ENCODE measurements at regions of chr7 and their contacts with region 1.

Region 1: DNA sequence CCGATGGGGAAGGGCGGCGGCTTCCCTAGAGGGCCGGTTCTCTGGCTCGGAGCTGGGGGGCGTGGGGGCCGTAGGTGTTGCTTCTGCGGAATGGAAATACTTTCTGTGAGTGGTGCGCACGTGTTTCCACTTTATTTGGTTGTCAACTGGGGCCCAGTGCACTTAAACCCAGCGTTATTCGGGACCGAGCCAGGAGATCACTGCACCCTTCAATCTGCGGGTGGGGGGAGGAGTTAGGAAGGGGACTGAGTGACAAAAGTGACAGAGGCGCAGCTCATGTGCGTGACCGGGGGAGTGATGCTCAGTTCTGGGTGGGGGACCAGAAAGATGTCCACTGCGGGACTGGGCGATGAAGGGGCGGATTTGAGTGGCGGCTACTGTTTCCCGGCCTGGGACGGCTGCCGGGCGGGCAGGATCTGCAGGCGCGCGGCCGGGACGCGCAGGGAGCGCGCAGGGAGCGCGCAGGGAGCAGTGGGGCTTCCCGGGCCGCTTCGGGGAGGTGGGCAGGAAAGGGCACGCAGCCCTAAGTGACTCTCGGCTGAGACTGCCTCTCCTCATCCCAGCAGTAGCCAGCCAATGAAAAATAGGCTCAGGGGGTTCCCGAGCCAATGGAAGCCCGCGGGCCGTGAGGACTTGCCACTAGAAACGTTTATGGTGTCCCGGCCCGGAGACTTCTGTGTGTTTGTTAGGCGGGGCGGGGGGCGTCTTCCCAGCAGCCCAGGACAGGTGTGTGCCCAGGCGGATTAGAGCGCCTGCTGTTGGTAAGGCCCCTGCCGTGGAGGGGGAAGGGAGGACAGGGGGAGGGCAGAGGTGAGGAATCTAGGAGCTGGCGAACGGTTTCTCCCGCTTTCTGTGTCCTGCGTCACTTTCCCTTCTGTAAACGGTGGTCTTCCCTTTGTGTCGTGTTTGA is 54.3 kb upstream of the KDM7A start:
- DNase-seq: peak; percentile 67
- H3K4me3 Mint-ChIP-seq: peak overlapping the region; percentile 90
- H3K27ac Mint-ChIP-seq: peak overlapping the region; percentile 92
- H3K4me1 Mint-ChIP-seq: peaks cover 51% of the 10 kb centered on the region
- H3K27me3 Mint-ChIP-seq: no peaks in the 10 kb centered on the region

Region 2: GRCh38 chr7:140062528-140063299 is 168.4 kb before region 1 on chr7 and contains the start of gene PARP12:
- CTCF ChIA-PET with region 1: no interaction called
- POLR2A ChIA-PET with region 1: interaction called, 13 read pairs
- DNase-seq: peak; percentile 93
- H3K4me3 Mint-ChIP-seq: peak within 1 kb of the TSS; percentile 80
- H3K27ac Mint-ChIP-seq: peak within 1 kb of the TSS; percentile 82
- H3K4me1 Mint-ChIP-seq: peaks cover 48% of the 10 kb centered on the region
- H3K27me3 Mint-ChIP-seq: peaks cover 5% of the 10 kb centered on the region
- total RNA-seq, gene PARP12: 146 to 151 TPM

Region 3: DNA sequence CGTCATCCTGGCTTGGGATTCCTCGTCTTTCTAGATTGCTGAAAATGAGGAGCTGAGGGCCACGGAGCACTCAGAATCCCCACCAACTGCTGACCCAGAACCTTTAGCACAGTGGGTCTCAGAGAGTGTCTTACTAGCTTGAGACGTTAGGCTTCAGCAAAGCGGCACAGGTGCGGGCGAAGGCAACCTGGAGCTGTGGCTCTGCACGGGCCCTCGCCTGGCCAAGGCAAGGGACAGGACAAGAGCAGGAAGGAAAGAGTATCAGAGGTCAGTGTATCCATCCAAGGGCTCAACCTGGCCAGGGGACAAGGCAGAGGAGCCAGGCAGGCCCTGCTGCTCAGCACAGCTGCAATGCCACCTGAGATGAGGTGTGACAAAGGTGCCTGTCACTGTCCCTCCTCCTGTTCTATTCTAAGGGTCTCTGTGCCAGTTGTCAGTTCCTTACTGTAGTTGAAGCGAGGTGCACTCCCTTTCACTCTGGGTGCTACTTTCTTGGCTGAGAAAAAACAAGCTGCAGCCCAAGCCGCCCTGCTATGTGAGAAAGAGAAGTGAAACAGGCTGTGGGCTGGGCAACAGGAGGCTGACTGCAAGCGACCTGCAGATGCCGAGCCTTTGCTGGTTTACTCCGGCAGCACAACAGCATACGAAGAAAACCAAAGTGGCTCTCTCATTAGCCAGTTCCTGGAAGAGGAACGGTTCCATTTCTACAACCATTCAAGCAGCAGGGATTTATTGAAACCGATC is 21.1 kb before region 1 on chr7:
- CTCF ChIA-PET with region 1: interaction called, 12 read pairs
- POLR2A ChIA-PET with region 1: interaction called, 318 read pairs
- DNase-seq: peak; percentile 80
- H3K4me3 Mint-ChIP-seq: peak overlapping the region; percentile 58
- H3K27ac Mint-ChIP-seq: peak overlapping the region; percentile 94
- H3K4me1 Mint-ChIP-seq: peaks cover 90% of the 10 kb centered on the region
- H3K27me3 Mint-ChIP-seq: no peaks in the 10 kb centered on the region

Region 4: GRCh38 chr7:140242057-140243031 is 11.2 kb after region 1 on chr7:
- CTCF ChIA-PET with region 1: interaction called, 4 read pairs
- POLR2A ChIA-PET with region 1: interaction called, 15 read pairs
- DNase-seq: no peak
- H3K4me3 Mint-ChIP-seq: no peak overlapping the region
- H3K27ac Mint-ChIP-seq: peak overlapping the region; percentile 8
- H3K4me1 Mint-ChIP-seq: peaks cover 20% of the 10 kb centered on the region
- H3K27me3 Mint-ChIP-seq: no peaks in the 10 kb centered on the region

Region 5: GRCh38 chr7:140260352-140261104 is 29.4 kb after region 1 on chr7:
- CTCF ChIA-PET with region 1: interaction called, 6 read pairs
- POLR2A ChIA-PET with region 1: interaction called, 93 read pairs
- DNase-seq: no peak
- H3K4me3 Mint-ChIP-seq: no peak overlapping the region
- H3K27ac Mint-ChIP-seq: no peak overlapping the region
- H3K4me1 Mint-ChIP-seq: peaks cover 51% of the 10 kb centered on the region
- H3K27me3 Mint-ChIP-seq: no peaks in the 10 kb centered on the region

Region 6: GRCh38 chr7:140285938-140286337 is 54.8 kb after region 1 on chr7:
- CTCF ChIA-PET with region 1: no interaction called
- POLR2A ChIA-PET with region 1: no interaction called
- DNase-seq: no peak
- H3K4me3 Mint-ChIP-seq: no peak overlapping the region
- H3K27ac Mint-ChIP-seq: no peak overlapping the region
- H3K4me1 Mint-ChIP-seq: no peaks in the 10 kb centered on the region
- H3K27me3 Mint-ChIP-seq: no peaks in the 10 kb centered on the region